Motor neuron (in vitro differentiated cells): ENCODE measurements at regions of chr11 and their contacts with region 1.

Region 1: GRCh38 chr11:126669416-126669815 is 313.9 kb downstream of the ST3GAL4 start:
- ATAC-seq: peak in 2 of 8 experiments; percentile 70 to 77
- H3K4me3 ChIP-seq: no peak overlapping the region
- H3K27ac ChIP-seq: no peak overlapping the region
- H3K4me1 ChIP-seq: peaks cover 0 to 3% of the 10 kb centered on the region in 2 donors

Region 2: DNA sequence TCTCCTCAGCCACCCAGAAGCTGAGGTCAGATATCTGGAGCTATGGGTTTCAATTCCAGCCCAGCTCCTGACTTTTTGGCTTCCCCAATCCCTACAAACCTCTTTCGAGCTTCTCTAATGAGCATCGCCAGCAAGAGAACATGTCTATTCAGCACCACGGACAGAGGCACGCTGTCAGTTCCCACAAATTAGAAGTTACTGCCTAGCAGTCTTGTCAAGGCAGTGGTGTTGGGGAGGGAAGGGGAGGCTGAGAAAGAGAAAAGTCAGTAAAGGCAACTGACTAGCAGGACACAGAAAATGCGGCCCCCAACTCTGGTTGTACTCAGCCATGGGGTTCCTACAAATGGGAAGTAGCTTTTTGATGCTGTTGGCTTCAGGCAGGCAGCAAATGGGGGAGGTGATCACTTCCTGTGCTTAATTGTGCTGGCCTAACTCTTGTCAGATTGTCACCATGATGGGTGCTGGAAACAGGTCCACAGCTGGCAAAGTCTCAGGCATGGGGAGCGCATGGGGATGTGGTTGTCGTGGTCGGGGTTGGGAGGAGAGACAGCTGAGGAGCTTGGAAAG is 108.0 kb before region 1 on chr11:
- in situ Hi-C with region 1: loop called in 1 of 9 experiments (anchors 25 kb)
- ATAC-seq: peak in 5 of 8 experiments; percentile 45 to 80 (median 68)
- H3K4me3 ChIP-seq: no peak overlapping the region
- H3K27ac ChIP-seq: no peak overlapping the region
- H3K4me1 ChIP-seq: peaks cover 6 to 15% of the 10 kb centered on the region in 2 donors